Lower leg skin (tissue), 4 donors: ENCODE measurements at regions of chr1 and their contacts with region 1.

Region 1: GRCh38 chr1:48109390-48110013 is 112.3 kb upstream of the TRABD2B start:
- DNase-seq: peak in 1 of 2 donors; percentile 51
- H3K4me3 ChIP-seq: no peak overlapping the region
- CTCF ChIP-seq: no peak
- POLR2A ChIP-seq: no peak

Region 2: DNA sequence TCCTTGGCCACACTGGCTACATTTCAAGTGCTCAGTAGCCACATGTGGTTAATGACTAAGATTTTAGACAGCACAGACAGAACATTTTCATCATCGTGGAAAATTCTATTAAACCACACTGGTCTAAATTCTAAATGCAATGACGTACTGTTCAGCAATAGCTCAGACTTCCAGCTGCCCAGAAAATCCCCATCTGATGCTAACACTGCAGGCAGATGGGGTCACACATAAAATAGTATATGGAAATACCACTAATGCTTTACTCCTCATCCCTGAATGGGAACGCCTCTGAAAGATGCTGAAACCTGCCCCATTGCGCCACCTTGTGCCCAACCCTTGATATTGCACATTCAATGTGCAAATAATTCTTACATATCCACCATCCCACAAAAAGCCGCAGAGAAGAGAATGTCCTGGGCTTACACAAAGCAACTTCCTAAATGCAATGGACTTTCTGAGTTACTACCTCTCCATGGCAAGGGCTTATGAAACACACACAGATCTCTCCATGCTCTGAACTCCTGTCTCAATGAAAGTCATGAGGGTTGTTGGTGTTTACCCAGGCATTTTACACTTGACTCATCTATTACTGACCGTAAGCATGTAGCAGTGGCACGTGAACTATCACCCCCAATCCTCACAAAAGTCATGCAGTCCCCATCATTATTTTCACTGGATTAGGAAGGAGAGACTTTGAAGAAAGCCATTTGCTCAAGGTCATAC is 92.7 kb after region 1 on chr1:
- intact Hi-C with region 1: loop called (anchors 5 kb)
- DNase-seq: peak; percentile 70 to 91
- H3K4me3 ChIP-seq: no peak overlapping the region
- CTCF ChIP-seq: peak in 1 of 3 donors; percentile 33
- POLR2A ChIP-seq: no peak

Region 3: GRCh38 chr1:48236716-48237470 is 127.4 kb after region 1 on chr1:
- intact Hi-C with region 1: loop called (anchors 10 kb)
- DNase-seq: no peak
- H3K4me3 ChIP-seq: no peak overlapping the region
- CTCF ChIP-seq: no peak
- POLR2A ChIP-seq: no peak